ENCODE measurements at regions of chr18 and their contacts with region 1.

Region 1: DNA sequence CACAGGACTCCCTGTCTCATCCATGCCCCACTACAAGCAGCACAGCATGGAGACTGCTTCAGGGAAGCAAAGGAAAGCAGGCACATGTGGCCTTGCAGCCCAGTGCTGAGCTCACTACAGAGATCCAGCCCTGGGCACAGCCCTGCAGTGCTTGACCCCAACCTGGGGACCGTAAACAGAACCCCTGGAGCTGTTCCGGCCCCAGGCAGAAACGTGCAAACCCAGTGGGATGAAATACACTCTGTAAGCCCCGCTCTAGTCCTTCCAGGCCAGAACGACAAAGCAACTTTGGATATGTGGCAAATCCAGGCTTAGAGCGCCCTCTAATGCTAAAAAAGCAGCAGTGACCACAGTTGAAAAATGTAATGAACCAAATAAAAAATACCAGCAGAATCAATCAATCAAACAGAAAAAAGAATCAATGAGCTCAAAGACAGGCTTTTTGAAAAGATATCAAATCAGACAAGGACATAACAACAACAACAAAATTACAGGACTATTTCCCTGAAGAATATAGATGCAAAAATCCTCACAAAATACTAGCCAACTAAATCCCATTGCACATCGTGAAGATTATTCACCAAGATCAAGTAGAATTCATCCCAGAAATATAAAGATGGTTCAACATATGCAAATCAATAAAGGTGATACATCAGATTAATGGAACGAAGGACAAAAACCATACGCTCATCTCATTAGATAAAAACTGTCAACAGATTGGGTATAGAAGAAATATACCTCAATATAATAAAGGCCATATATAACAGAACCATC is 45.6 kb downstream of the ZNF519 start:
- DNase-seq: no peak
- H3K4me3 Mint-ChIP-seq: no peak overlapping the region
- H3K27ac Mint-ChIP-seq: no peak overlapping the region
- H3K4me1 Mint-ChIP-seq: no peaks in the 10 kb centered on the region
- H3K27me3 Mint-ChIP-seq: no peaks in the 10 kb centered on the region

Region 2: GRCh38 chr18:13823707-13824395 is 262.8 kb before region 1 on chr18 and contains the start of gene MC5R:
- CTCF ChIA-PET with region 1: interaction called, 12 read pairs
- DNase-seq: peak; percentile 71
- H3K4me3 Mint-ChIP-seq: peak within 1 kb of the TSS; percentile 43
- H3K27ac Mint-ChIP-seq: no peak within 1 kb of the TSS
- H3K4me1 Mint-ChIP-seq: peaks cover 6% of the 10 kb centered on the region
- H3K27me3 Mint-ChIP-seq: peaks cover 42% of the 10 kb centered on the region